ENCODE measurements at regions of chr7 and their contacts with region 1.

Region 1: GRCh38 chr7:22488643-22489462 is 11.1 kb downstream of the STEAP1B start:
- DNase-seq: no peak
- ATAC-seq: no peak

Region 2: DNA sequence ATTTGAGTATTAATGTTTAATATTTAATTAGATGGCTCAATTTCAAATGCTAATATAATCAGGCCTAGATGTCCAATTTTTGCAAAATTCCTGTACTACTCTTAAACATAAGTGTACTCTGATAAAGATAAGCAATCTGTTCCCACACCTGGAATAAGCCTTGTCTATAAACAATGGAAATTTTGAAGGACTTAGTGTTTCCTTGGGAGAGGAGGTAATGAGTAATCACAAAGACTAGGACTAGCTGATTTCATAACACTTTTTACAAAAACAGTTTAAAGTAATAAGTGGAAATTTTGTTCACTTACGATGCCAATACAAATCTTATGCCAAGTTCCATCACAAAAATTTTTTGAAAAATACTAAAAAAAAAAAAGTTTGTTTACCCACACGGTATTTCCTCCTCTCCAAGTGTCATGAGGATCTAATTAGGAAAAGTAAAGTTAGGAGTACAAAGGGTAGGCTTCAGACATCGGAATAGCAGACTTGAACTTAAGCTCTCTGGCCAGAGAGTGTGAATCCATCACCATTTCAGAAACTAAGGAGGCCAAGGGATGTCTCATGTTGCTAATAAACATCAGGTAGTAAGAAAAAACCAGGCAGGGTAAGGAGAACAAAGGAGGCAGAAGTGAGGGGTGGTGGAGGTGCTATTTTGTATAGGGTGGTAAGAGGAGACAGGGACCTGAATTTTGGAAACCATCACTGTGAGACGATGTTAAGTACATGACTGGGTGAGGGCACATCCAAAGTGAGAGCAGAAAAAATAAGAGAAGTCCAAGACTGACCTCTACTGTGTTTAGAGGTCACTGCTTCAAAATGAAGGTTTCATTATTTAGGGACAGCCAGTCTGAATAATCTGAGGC is 193.2 kb before region 1 on chr7:
- intact Hi-C with region 1: loop called (anchors 5 kb)
- DNase-seq: no peak
- ATAC-seq: peak; percentile 37